Adrenal gland (tissue), 19 donors: ENCODE measurements at regions of chr10 and their contacts with region 1.

Region 1: DNA sequence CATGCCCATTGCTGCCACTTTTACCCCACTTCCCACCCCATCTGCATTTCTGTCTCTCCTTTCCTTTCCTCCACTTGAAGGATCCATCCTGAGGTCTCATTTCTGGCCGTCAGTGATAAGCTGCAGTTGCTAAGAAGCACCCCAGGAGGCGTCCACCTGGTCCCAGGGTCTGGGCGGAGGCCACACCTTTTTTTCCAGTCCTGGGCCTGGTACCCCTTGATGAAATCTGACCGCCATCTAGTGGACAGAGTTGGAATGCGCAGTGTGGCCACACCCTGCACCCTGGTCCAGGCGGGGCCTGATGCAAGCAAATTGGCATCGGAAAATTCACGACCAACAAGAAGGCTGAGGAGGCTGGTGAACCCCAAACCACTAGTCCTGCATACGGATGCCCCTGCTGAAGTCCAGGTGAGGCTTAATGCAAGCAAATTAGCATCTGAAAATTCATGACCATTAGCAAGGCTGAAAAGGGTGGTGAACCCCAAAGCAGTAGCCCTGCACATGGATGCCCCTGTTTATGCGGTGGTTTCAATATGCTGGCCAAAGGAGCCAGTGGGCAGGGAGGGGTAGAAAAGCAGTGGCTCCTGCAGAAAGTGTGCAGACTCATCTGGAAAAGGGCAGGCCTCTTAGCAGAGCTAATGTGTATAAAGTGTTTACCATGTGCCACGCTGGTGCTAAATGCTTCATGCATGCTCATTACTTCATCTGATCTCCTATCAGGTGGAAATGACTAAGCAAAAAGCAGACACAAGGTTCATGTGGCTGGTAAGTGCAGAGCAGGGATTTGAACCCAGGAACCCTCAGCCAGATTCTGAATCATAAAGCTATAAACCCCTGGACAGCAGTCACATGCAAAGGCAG is 43.2 kb downstream of the GPAM start:
- DNase-seq: peak; percentile 53 to 85 (median 69)
- H3K4me3 ChIP-seq: no peak overlapping the region
- H3K27ac ChIP-seq: no peak overlapping the region
- H3K4me1 ChIP-seq: no peaks in the 10 kb centered on the region
- H3K27me3 ChIP-seq: no peaks in the 10 kb centered on the region
- CTCF ChIP-seq: peak; percentile 51 to 80 (median 64)
- POLR2A ChIP-seq: no peak

Region 2: DNA sequence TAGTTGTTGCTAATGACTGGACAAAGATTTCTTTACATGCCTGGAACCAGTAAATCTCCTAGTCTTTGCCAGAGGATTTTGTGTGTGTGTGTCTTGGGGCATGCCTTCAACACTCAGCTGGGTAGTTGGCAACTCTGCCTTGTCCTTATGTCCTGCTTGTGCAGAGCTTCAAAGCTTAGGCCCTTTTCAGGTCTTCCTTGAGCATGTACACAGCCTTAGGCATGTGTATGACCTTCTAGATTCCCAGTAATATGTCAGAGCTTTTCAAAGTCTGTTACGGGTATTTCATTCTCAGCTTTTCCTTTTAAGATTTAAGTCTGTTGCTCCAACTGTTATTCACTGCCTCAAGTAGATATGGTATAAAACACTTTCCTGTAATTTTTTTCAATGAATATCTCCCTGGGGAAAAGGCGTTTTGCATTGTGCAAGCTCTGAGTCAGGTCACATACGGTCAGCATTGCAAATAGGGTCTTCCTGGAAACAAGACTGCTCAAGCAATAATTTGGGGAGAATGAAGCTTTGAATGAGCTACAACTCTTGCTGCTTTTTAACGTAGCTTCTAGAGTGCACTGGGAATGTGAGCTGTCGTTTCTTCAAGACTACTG is 1195.4 kb before region 1 on chr10:
- intact Hi-C with region 1: no loop called
- DNase-seq: no peak
- H3K4me3 ChIP-seq: no peak overlapping the region
- H3K27ac ChIP-seq: no peak overlapping the region
- H3K4me1 ChIP-seq: no peaks in the 10 kb centered on the region
- H3K27me3 ChIP-seq: no peaks in the 10 kb centered on the region
- CTCF ChIP-seq: no peak
- POLR2A ChIP-seq: no peak

Region 3: DNA sequence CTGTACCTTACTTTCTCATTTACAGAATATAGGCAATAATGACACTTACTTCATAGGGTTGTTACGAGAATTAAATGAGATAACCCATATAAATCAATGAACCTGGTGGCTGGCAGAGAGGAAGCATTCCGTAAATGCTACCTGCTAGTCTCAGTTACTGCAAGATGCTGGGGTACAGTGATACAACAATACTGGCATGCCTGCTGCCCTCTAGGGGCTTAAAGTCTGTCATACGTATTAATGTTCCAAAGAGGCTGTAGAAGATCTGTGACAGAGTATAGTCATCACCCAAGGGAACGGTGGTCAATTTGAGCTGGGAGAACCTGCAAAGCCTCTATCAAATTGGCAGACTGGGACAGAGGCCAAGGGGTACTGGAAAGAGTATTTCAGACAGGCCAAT is 378.2 kb before region 1 on chr10:
- intact Hi-C with region 1: loop called in 1 of 2 experiments (anchors 10 kb)
- DNase-seq: no peak
- H3K4me3 ChIP-seq: no peak overlapping the region
- H3K27ac ChIP-seq: no peak overlapping the region
- H3K4me1 ChIP-seq: no peaks in the 10 kb centered on the region
- H3K27me3 ChIP-seq: no peaks in the 10 kb centered on the region
- CTCF ChIP-seq: no peak
- POLR2A ChIP-seq: no peak

Region 4: GRCh38 chr10:111821871-111822270 is 318.5 kb before region 1 on chr10:
- intact Hi-C with region 1: no loop called
- DNase-seq: no peak
- H3K4me3 ChIP-seq: no peak overlapping the region
- H3K27ac ChIP-seq: no peak overlapping the region
- H3K4me1 ChIP-seq: no peaks in the 10 kb centered on the region
- H3K27me3 ChIP-seq: no peaks in the 10 kb centered on the region
- CTCF ChIP-seq: no peak
- POLR2A ChIP-seq: no peak

Region 5: GRCh38 chr10:112030431-112030830 is 109.9 kb before region 1 on chr10:
- intact Hi-C with region 1: no loop called
- DNase-seq: no peak
- H3K4me3 ChIP-seq: no peak overlapping the region
- H3K27ac ChIP-seq: no peak overlapping the region
- H3K4me1 ChIP-seq: no peaks in the 10 kb centered on the region
- H3K27me3 ChIP-seq: no peaks in the 10 kb centered on the region
- CTCF ChIP-seq: no peak
- POLR2A ChIP-seq: no peak

Region 6: DNA sequence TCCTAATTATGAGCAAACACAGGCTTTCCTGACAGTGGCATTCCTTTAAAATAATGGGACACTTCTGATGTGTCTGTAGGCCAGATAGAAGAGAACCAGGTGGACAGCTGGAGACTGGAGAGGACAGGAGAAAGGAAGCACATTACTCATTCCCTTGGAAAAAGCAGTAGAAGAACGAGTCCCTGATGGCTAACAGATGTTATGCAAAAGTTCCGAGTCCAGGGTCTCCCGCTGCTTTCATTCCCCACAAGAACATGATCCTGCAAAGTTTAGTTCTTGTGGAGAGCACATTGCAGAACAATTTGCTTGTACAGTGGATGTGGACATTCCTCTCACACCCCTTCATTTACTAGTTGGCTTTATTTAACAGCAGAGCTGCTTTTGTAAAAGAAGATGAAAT is 94.4 kb before region 1 on chr10:
- intact Hi-C with region 1: no loop called
- DNase-seq: no peak
- H3K4me3 ChIP-seq: no peak overlapping the region
- H3K27ac ChIP-seq: no peak overlapping the region
- H3K4me1 ChIP-seq: no peaks in the 10 kb centered on the region
- H3K27me3 ChIP-seq: no peaks in the 10 kb centered on the region
- CTCF ChIP-seq: no peak
- POLR2A ChIP-seq: no peak

Region 7: GRCh38 chr10:112307358-112308124 is 167.2 kb after region 1 on chr10:
- intact Hi-C with region 1: loop called in 1 of 2 experiments (anchors 10 kb)
- DNase-seq: peak; percentile 38 to 79 (median 62)
- H3K4me3 ChIP-seq: no peak overlapping the region
- H3K27ac ChIP-seq: no peak overlapping the region
- H3K4me1 ChIP-seq: no peaks in the 10 kb centered on the region
- H3K27me3 ChIP-seq: no peaks in the 10 kb centered on the region
- CTCF ChIP-seq: peak; percentile 57 to 76 (median 74)
- POLR2A ChIP-seq: no peak

Region 8: DNA sequence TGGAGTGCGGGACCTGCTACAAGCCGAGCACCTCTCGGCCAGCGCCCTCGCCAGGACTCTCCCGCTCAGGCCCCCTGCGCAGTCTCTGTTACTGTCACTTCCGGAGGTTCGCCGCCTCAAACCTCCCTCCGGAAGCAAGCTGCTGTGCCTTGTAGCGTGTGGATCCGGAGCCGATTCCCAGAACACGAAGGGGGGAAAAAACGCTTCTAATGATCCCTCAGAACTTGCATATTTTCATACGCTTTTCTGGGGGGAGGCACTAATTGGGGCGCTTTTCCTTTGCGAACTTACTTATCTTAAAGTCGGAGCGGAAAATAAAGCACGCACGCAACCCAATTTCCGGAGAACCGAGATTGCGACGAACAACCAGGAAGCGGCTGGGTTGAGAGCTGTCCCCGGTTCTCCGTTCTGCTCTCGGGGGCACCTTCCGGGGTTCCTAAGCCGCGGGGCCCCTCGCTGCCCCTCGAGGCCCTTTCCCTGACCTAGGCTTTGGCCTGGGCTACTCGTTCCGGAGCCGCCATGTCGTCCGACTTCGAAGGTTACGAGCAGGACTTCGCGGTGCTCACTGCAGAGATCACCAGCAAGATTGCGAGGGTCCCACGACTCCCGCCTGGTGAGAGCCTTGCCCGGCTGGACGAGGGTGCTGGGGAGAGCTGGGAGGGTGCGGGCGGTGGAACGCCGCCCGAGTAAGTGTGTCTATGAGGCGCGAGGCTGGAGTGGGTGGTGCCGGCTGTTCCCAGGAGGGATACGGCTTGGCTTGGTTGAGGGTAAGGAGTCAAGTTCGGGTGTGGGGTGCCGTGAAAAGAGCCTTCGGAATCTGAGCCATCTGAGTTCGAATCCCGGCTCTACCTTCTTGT is 306.7 kb after region 1 on chr10 and contains the starts of genes VTI1A and ZDHHC6:
- intact Hi-C with region 1: loop called in 1 of 2 experiments (anchors 10 kb)
- DNase-seq: peak; percentile 81 to 93 (median 86)
- H3K4me3 ChIP-seq: peak within 1 kb of the TSS; percentile 64 to 94 (median 89)
- H3K27ac ChIP-seq: peak within 1 kb of the TSS; percentile 55 to 92 (median 87)
- H3K4me1 ChIP-seq: peaks cover 11 to 30% of the 10 kb centered on the region in 2 donors
- H3K27me3 ChIP-seq: no peaks in the 10 kb centered on the region
- CTCF ChIP-seq: peak in 3 of 6 experiments; percentile 6 to 25 (median 16)
- POLR2A ChIP-seq: peak; percentile 41 to 54
- total RNA-seq, gene VTI1A: 18.1 to 64.1 (median 28.1) TPM
- total RNA-seq, gene ZDHHC6: 10.8 to 36.7 (median 26.6) TPM